ENCODE measurements at regions of chr2 and their contacts with region 1.

Region 1: DNA sequence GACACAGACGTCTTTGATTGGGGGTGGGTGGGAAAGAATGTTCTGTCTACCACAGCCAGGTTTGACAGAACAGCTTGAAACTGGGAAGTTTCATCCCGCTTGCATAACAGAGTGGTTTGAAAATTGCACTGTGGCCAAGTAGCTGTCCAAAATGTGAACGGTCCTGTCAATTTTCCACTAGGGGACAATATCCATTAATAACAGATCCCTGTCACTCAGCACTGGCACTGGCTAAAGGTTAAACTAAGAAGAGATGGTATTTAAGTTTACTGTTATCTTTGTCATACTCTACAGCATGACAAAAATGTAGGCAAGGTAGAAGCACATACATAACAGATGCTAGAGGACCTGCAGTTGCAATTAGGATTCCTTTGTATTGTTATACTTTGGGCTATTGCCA is 55.6 kb upstream of the ACMSD start:
- DNase-seq: peak; percentile 34
- ATAC-seq: peak; percentile 69
- H3K4me3 ChIP-seq: no peak overlapping the region
- H3K27ac ChIP-seq: no peak overlapping the region
- H3K4me1 ChIP-seq: no peaks in the 10 kb centered on the region
- H3K27me3 ChIP-seq: no peaks in the 10 kb centered on the region; the same call in 1 of the 2 replicates
- CTCF ChIP-seq: peak; percentile 41 to 66 (median 58); a peak in 5 of 6 replicates
- POLR2A ChIP-seq: no peak
- RAD21 ChIP-seq: peak; percentile 79

Region 2: DNA sequence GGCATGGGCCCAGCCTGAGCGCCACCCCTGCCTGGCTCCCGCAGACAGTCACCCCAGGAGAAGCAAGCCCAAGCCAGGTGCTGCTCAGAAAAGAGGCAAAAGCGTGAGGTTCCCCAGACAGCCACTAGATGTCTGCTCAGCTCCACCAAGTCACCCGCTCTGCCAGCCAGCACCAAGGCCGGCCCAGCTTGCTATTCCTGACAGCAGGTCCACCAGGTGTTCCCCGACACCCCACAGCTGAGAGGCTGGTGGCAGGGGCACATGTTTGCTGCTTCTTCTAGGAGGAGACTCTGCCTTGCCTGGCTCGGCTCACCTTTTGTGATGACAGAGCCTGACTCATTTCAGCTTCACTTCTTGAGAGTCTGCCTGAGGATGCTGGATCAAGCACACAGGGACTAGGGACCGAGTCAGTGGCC is 322.2 kb before region 1 on chr2:
- CTCF ChIA-PET with region 1: interaction called, 3 read pairs
- POLR2A ChIA-PET with region 1: no interaction called
- RAD21 ChIA-PET with region 1: no interaction called
- intact Hi-C with region 1: loop called (anchors 10 kb)
- DNase-seq: peak; percentile 48
- ATAC-seq: peak; percentile 96
- H3K4me3 ChIP-seq: no peak overlapping the region
- H3K27ac ChIP-seq: no peak overlapping the region
- H3K4me1 ChIP-seq: no peaks in the 10 kb centered on the region
- H3K27me3 ChIP-seq: no peaks in the 10 kb centered on the region
- CTCF ChIP-seq: peak; percentile 42 to 69 (median 63); a peak in 5 of 6 replicates
- POLR2A ChIP-seq: no peak
- RAD21 ChIP-seq: peak; percentile 83

Region 3: DNA sequence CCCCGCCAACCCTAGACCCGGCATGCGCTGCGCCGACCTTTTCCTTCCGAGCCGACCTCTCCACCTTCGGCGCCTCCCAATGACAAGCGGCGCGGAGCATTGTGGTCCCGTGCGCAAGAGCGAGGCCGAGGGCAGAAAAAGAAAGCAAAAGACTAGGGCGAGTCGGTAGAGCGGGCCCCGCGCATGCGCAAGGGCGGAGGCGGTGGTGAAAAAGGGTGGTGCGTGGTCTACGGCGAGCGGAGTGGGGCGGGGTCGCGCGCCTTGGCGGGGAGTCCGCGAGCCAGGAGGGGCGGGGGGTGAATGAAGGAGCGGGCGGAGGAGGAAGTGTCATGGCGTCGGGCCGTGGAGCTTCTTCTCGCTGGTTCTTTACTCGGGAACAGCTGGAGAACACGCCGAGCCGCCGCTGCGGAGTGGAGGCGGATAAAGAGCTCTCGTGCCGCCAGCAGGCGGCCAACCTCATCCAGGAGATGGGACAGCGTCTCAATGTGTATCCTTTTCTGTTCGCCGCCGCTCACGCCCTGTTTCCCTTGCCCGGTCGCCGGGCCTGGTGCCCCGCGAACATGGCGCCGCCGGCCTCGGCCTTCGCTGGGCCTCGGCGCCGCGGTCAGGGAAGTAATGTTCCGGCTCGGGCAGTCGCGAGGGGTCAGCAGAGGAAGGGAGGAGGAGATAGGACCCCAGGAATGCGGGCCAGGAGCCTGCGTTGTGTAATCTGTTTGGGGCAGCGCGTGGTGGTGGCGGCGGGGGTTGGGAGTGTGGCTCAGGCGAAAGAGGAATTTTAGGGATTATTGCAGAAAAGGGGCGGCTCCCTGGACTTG is 135.9 kb after region 1 on chr2 and contains the start of gene CCNT2:
- CTCF ChIA-PET with region 1: no interaction called
- POLR2A ChIA-PET with region 1: no interaction called
- RAD21 ChIA-PET with region 1: no interaction called
- intact Hi-C with region 1: no loop called
- DNase-seq: peak; percentile 98
- ATAC-seq: peak; percentile 86
- H3K4me3 ChIP-seq: peak within 1 kb of the TSS; percentile 72 to 90
- H3K27ac ChIP-seq: peak within 1 kb of the TSS; percentile 97
- H3K4me1 ChIP-seq: peaks cover 12 to 22% of the 10 kb centered on the region in 2 experiments; a peak in 3 of 4 replicates
- H3K27me3 ChIP-seq: no peaks in the 10 kb centered on the region
- CTCF ChIP-seq: no peak
- POLR2A ChIP-seq: peak; percentile 54
- RAD21 ChIP-seq: no peak
- total RNA-seq, gene CCNT2: 32.6 TPM

Region 4: GRCh38 chr2:134949981-134950708 is 167.4 kb after region 1 on chr2:
- CTCF ChIA-PET with region 1: no interaction called
- POLR2A ChIA-PET with region 1: no interaction called
- RAD21 ChIA-PET with region 1: no interaction called
- intact Hi-C with region 1: no loop called
- DNase-seq: no peak
- ATAC-seq: no peak
- H3K4me3 ChIP-seq: no peak overlapping the region
- H3K27ac ChIP-seq: no peak overlapping the region
- H3K4me1 ChIP-seq: no peaks in the 10 kb centered on the region
- H3K27me3 ChIP-seq: no peaks in the 10 kb centered on the region
- CTCF ChIP-seq: no peak
- POLR2A ChIP-seq: no peak
- RAD21 ChIP-seq: no peak

Measured in HCT116 (cell line).